BJ (cell line): ENCODE measurements at regions of chr19 and their contacts with region 1.

Region 1: DNA sequence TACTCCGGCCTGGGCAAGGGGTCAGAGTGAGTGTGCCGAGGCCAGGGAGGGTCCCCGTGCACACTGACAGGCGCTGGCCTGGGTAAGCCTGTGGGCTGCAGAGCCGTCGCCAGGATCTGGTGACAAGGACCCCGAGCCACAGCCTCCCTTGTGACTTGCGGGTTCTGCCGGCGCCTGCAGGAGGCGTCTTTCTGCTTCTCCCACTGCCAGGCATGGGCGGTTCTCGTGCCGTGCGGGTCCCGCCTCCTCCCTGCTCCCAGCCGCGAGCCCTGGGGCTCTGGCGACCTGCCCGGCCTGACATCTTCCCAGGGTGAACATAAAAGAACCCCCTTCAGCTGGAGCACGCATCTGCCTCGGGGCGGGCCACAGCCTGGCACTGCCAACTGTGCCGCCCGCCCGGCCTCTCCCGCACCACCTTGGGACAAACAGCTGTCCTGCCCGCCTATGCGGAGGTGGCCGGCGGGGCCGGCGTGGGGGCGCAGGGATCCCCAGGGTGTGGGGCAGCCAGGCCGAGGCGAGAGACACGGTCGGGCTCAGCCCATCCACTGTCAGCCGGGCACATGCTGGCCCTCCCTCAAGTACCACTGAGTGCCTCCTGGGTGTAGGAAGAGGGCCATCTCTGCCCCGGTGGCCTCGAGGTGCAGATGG is 1.5 kb upstream of the HCN2 start:
- DNase-seq: peak; percentile 51
- H3K4me3 ChIP-seq: no peak overlapping the region
- H3K27me3 ChIP-seq: no peaks in the 10 kb centered on the region; the same call in 1 of the 2 replicates
- CTCF ChIP-seq: peak; percentile 89

Region 2: GRCh38 chr19:367963-368629 is 220.1 kb before region 1 on chr19:
- CTCF ChIA-PET with region 1: no interaction called
- POLR2A ChIA-PET with region 1: no interaction called
- DNase-seq: no peak
- H3K4me3 ChIP-seq: no peak overlapping the region
- H3K27me3 ChIP-seq: peaks cover 11% of the 10 kb centered on the region
- CTCF ChIP-seq: no peak

Region 3: DNA sequence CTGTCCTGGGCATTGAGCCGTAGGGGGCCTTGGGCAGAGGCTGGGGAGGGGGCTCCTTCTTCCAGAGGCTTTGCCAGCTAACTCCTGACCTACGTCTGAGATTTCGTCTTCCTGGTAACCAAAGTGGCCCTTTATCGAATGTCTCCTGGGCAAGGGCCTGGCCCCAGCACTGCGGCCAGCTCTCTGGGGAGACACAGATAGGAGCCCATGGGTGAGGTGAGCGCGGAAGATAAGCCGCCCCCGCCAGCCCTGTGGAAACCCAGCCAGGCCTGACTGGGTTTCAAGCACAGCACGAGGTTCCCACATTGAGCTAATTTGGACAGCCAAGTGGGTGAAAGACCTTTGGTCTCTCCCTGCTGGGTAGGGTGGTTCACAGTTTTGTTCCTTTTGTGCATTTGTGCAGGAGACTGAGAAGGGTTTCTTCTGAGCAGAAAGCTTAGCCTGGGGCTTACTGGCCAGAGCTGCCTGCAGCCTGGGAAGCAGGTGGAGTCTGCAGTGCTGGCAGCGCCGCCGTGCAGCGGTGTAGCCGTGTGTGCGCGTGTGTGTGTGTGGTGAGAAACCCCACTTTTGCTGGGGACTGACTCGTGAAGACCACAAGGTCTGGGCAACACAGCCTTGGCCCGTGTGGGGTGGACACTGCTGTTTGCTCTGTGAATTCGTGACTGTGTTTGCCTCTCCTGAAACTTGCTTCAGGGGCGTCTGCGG is 13.4 kb before region 1 on chr19:
- CTCF ChIA-PET with region 1: interaction called, 53 read pairs
- POLR2A ChIA-PET with region 1: interaction called, 3 read pairs
- DNase-seq: no peak
- H3K4me3 ChIP-seq: peak overlapping the region; percentile 29
- H3K27me3 ChIP-seq: no peaks in the 10 kb centered on the region
- CTCF ChIP-seq: no peak

Region 4: GRCh38 chr19:623974-624373 is 35.8 kb after region 1 on chr19:
- CTCF ChIA-PET with region 1: interaction called, 15 read pairs
- POLR2A ChIA-PET with region 1: no interaction called
- DNase-seq: peak; percentile 91
- H3K4me3 ChIP-seq: no peak overlapping the region
- H3K27me3 ChIP-seq: no peaks in the 10 kb centered on the region
- CTCF ChIP-seq: no peak

Region 5: GRCh38 chr19:648904-649821 is 60.9 kb after region 1 on chr19:
- CTCF ChIA-PET with region 1: no interaction called
- POLR2A ChIA-PET with region 1: no interaction called
- DNase-seq: no peak
- H3K4me3 ChIP-seq: no peak overlapping the region
- H3K27me3 ChIP-seq: no peaks in the 10 kb centered on the region
- CTCF ChIP-seq: no peak